Activated CD4-positive, alpha-beta T cell treated with anti-CD3 and anti-CD28 coated beads for 36 hours (primary cell): ENCODE measurements at regions of chr7 and their contacts with region 1.

Region 1: GRCh38 chr7:81469869-81470723 is 299.8 kb downstream of the HGF start:
- DNase-seq: peak; percentile 71
- ATAC-seq: no peak
- H3K4me3 Mint-ChIP-seq: no peak overlapping the region
- H3K27ac Mint-ChIP-seq: no peak overlapping the region
- H3K4me1 Mint-ChIP-seq: no peaks in the 10 kb centered on the region
- H3K27me3 Mint-ChIP-seq: no peaks in the 10 kb centered on the region

Region 2: DNA sequence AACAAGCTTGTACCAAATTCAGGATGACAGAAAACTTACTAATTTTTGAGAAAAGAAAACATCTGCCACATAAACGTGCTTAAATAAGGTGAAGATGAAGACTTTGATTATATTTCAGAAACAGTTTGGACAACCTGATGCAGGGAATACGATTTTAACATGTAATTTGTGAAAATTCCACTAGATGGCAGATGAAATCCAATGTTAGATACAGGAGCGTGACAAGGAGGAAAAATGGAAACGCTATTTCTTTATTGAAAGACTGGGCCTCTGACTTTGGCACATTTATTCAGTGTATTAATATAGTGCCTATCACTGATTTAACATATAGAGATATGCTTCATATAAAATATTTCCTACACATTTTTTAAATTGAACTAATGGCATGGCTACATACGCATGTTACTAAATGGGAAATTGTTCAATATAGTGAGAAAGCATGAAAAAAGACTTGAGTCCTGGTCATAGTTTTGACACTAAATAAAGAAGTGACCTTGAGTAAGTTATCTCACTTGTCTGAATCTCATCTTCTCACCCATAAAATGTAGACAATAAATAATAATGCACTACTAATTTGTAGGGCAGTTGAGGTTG is 771.0 kb before region 1 on chr7:
- CTCF ChIA-PET with region 1: interaction called, 13 read pairs
- POLR2A ChIA-PET with region 1: no interaction called
- intact Hi-C with region 1: loop called (anchors 1 kb)
- DNase-seq: no peak
- ATAC-seq: no peak
- H3K4me3 Mint-ChIP-seq: no peak overlapping the region
- H3K27ac Mint-ChIP-seq: no peak overlapping the region
- H3K4me1 Mint-ChIP-seq: no peaks in the 10 kb centered on the region
- H3K27me3 Mint-ChIP-seq: no peaks in the 10 kb centered on the region

Region 3: DNA sequence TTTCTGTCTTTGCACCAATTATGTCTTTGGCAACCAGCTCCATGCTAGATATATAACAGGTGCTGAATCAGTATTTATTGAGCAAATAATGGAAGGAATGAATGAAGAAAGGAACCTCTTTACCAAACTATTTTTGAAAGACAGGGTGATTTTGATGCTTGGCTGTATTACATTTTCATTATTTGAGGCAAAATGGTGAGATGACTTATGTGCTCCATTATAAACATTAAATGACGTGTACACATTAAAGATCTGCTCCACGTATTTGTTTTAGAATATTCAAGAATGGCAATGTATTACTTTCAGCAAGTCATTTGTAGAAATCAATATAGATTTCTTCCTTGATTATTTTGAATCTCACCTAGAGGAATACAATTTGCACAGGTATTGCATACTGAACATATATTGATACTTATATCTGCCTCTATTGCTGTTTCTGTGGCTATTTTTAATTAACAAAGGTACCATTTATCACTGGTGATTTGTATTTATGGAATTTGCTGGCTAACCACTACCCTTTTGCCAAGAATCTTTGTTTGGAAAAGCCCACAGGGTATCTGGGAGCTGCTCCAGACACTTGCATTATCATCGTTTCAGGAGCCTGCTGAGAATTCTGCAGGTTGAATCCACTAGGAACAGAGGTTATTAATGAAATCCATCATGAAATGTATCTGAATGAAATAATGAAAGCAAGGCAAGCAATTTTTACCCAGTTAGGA is 643.4 kb before region 1 on chr7:
- CTCF ChIA-PET with region 1: no interaction called
- POLR2A ChIA-PET with region 1: no interaction called
- intact Hi-C with region 1: no loop called
- DNase-seq: no peak
- ATAC-seq: no peak
- H3K4me3 Mint-ChIP-seq: no peak overlapping the region
- H3K27ac Mint-ChIP-seq: no peak overlapping the region
- H3K4me1 Mint-ChIP-seq: no peaks in the 10 kb centered on the region
- H3K27me3 Mint-ChIP-seq: no peaks in the 10 kb centered on the region

Region 4: DNA sequence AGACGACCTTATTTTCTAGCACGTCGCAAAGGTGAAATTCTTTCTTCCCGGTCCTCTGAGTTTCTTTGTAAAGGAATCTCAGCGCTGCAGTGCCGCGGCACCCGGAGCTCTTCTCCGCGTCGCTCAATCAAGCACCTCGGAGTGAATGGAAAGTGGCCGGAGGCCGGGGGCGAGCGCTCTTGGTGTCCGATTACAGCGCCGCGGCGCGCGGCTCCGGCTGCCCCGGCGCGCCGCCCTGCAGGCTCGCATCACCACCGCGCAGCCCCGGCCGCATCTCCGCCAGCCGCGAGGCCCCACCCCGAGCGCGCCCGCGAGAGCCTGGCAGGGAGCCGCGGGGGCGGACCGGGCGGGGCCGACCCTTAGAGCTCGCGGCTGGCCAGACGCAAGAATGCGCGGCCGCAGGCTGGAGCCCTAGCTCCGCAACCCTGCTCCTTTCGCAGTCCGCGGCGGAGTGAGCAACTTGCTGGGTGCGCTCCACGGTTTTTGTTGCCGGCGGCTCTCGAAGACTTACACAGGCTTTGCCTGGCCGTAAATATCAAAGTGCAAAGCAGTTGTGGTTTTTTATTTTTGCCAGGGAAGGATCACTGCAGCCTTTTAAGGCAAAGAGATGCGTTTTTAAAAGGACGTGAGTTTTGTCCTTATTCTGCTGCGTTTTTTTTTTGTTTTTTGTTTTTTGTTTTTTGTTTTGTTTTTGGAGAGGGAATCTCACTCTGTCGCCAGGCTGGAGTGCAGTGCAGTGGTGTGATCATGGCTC is 551.0 kb before region 1 on chr7 and contains the start of gene SEMA3C:
- CTCF ChIA-PET with region 1: no interaction called
- POLR2A ChIA-PET with region 1: no interaction called
- intact Hi-C with region 1: loop called in 1 of 2 experiments (anchors 10 kb)
- DNase-seq: peak; percentile 45
- ATAC-seq: peak; percentile 80
- H3K4me3 Mint-ChIP-seq: peak within 1 kb of the TSS; percentile 43
- H3K27ac Mint-ChIP-seq: no peak within 1 kb of the TSS
- H3K4me1 Mint-ChIP-seq: peaks cover 6% of the 10 kb centered on the region
- H3K27me3 Mint-ChIP-seq: peaks cover 44% of the 10 kb centered on the region
- total RNA-seq, gene SEMA3C: not detected

Region 5: DNA sequence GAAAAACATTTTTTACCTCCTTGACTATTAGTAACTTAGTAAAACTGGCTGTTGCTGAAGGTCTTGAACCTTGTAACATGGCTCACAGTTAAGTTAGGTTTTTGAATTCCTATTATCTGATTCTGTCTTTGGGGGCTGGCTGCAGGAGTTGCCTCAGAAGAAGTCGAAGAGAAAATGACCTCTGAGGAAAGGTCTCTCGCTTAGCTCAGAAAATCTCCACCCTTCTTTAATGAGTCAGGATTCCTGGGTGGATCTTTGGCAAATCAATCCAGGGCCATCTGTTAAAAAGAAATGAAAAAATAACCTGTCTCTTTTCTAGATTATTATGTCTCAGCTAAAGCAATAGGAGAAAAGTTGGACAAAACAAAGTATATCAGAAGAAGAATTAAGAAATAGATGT is 283.4 kb before region 1 on chr7:
- CTCF ChIA-PET with region 1: no interaction called
- POLR2A ChIA-PET with region 1: no interaction called
- intact Hi-C with region 1: loop called in 1 of 2 experiments (anchors 5 kb)
- DNase-seq: no peak
- ATAC-seq: no peak
- H3K4me3 Mint-ChIP-seq: no peak overlapping the region
- H3K27ac Mint-ChIP-seq: no peak overlapping the region
- H3K4me1 Mint-ChIP-seq: no peaks in the 10 kb centered on the region
- H3K27me3 Mint-ChIP-seq: no peaks in the 10 kb centered on the region